ENCODE measurements at regions of chr4 and their contacts with region 1.

Region 1: DNA sequence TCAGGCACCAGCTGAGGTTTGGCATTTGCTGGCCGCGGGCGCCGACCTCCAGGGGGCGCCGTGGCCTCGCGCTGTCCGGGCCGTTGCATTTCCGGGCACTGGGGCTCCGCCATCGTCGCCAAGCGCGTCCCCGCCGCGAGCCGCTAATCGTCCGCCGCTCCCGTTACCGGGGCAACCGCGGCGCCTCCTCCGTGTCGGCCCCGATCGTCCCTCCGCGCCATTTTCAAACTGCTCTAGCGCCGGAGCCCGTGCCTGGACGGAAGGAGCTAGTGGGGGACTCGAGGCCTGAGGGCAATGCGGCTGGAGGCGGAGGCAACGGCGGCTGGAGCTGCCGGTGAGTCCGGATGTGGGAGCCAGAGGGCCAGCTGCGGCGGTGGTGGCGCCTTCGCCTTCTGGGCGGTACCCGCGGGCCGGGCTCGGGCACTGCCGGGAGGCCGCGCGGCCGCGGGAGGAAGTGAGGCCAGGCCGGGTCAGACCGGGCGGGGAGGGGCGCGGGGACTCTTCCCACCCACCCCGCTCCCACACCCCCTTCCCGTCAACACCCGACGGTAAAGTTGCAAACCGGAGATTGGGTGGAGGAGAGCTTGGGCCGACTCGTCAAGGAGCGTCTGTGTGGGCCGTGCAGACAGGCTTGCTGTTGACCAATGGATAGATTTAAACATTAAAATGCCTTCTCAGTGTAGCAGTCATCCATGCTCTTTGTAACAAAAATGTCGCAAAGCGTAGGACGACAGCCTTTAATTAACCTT is at the start of gene CEP135:
- DNase-seq: peak; percentile 96
- H3K4me3 ChIP-seq: peak within 1 kb of the TSS; percentile 79 to 88 (median 84)
- H3K27ac ChIP-seq: peak within 1 kb of the TSS; percentile 84 to 95 (median 88)
- H3K4me1 ChIP-seq: peaks cover 0 to 31% (median 21%) of the 10 kb centered on the region in 4 donors
- H3K27me3 ChIP-seq: no peaks in the 10 kb centered on the region
- CTCF ChIP-seq: peak; percentile 73 to 94 (median 88)
- EP300 ChIP-seq: no peak
- POLR2A ChIP-seq: no peak
- total RNA-seq, gene CEP135: 4.3 to 8.6 (median 6.9) TPM

Region 2: DNA sequence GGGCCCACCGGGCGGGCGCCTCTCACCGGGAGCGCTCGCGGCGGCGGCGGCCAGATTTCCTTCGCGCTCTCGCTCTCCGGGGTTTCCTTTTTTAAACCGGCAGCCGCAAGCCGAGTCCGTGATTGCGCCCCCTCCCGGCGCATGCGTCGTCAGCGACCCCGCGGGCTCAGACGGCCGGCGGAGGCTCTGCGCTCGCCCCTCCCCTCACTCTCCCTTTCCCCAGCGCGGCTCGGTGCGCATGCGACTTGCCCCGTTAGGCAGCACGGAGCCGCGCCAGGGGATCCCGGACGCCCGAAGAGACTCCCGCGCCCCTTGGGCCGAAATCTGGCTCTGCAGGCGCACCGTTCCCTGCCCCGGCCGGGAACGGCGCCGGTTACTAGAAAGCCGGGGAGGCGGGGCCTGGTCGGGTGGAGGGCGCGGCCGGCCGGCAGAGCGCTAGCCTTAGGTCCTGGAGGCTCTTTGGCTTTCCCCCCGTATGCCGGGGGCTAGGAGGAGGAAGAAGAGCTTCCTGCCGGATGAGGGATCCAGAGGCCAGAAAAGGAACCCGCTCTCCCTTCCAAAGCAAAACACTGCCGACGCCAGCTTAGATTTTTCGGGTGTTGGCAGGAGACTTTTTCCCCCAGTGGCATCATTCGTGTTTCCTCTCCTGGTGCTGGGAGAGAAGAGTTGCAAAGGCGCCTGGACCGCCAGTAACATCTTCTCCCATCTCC is 402.0 kb before region 1 on chr4 and contains the start of gene CLOCK:
- intact Hi-C with region 1: loop called (anchors 5 kb)
- DNase-seq: peak; percentile 92
- H3K4me3 ChIP-seq: peak within 1 kb of the TSS; percentile 61 to 98 (median 86)
- H3K27ac ChIP-seq: peak within 1 kb of the TSS; percentile 91 to 99 (median 98)
- H3K4me1 ChIP-seq: peaks cover 3 to 24% (median 10%) of the 10 kb centered on the region in 4 donors
- H3K27me3 ChIP-seq: no peaks in the 10 kb centered on the region
- CTCF ChIP-seq: peak; percentile 22 to 58 (median 46)
- EP300 ChIP-seq: no peak
- POLR2A ChIP-seq: peak; percentile 51 to 63
- total RNA-seq, gene CLOCK: 22.5 to 27.5 (median 24.0) TPM

Region 3: DNA sequence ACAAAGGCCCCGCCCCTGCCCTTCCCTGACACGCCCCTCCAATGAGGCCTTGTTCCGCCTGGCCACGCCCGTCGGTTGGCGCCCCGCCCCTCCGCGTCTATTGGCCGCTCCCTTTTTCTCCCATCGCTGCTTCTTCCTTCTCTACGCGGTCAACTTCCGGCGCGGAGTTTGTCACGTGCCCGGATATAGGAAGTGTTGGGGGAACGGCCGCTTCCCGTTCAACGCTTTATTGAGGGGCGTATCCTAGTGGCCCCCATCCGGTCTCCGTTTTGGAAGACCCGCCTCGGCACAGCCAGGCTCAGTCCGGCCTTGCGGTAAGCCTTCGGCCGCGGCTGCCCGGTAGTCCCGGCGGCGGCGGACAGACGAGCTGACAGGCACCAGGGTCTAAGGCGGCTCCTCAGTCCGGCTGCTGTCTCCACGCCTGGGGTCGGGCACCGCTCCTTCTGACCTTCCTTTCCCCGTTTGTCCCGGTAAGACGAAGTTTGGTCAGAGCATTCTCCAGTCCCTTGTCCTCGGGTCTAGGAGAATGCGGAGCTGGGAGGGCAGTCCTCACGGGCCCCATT is 95.3 kb before region 1 on chr4 and contains the start of gene EXOC1:
- intact Hi-C with region 1: loop called (anchors 10 kb)
- DNase-seq: peak; percentile 99
- H3K4me3 ChIP-seq: peak within 1 kb of the TSS; percentile 73 to 93 (median 86)
- H3K27ac ChIP-seq: peak within 1 kb of the TSS; percentile 85 to 88 (median 88)
- H3K4me1 ChIP-seq: peaks cover 0 to 21% (median 17%) of the 10 kb centered on the region in 4 donors
- H3K27me3 ChIP-seq: no peaks in the 10 kb centered on the region
- CTCF ChIP-seq: no peak
- EP300 ChIP-seq: peak in 1 of 4 donors; percentile 38
- POLR2A ChIP-seq: peak in 1 of 2 donors; percentile 32
- total RNA-seq, gene EXOC1: 14.5 to 49.0 (median 21.7) TPM

Region 4: GRCh38 chr4:56301181-56302076 is 352.5 kb after region 1 on chr4:
- intact Hi-C with region 1: loop called (anchors 2 kb)
- DNase-seq: peak; percentile 79
- H3K4me3 ChIP-seq: no peak overlapping the region
- H3K27ac ChIP-seq: peak overlapping the region in 1 of 4 donors; percentile 49
- H3K4me1 ChIP-seq: peaks cover 0 to 23% (median 17%) of the 10 kb centered on the region in 4 donors
- H3K27me3 ChIP-seq: no peaks in the 10 kb centered on the region
- CTCF ChIP-seq: peak in 3 of 4 experiments; percentile 72 to 88 (median 73)
- EP300 ChIP-seq: no peak
- POLR2A ChIP-seq: no peak

Region 5: DNA sequence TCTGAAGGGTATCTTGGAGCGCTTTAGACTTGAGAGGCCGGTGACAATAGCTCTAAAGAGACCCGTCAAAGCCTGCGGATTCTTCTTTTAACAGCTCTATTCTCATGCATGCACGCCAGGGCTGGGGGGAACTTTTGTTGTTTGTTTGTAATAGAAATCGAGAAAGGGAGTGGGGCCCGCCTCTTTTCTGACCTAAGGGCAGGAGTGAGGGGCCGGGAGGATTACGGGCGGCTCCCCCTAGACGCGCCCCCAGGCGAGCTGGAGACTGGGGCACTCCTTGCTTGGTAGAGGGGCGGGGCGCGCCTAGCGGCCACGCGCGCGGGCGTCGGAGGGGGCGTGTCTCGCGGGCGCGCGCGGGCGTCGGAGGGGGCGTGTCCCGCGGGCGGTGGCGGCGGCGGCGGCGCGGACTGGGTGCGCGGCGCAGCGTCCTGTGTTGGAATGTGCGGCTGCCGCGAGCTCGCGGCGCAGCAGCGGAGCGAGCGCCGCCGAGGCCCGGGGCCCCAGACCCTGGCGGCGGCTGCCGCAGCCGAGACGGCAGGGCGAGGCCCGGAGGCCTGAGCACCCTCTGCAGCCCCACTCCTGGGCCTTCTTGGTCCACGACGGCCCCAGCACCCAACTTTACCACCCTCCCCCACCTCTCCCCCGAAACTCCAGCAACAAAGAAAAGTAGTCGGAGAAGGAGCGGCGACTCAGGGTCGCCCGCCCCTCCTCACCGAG is 958.7 kb after region 1 on chr4 and contains the start of gene REST:
- intact Hi-C with region 1: loop called (anchors 5 kb)
- DNase-seq: peak; percentile 87
- H3K4me3 ChIP-seq: peak within 1 kb of the TSS; percentile 75 to 98 (median 94)
- H3K27ac ChIP-seq: peak within 1 kb of the TSS; percentile 89 to 97 (median 95)
- H3K4me1 ChIP-seq: peaks cover 0 to 30% (median 27%) of the 10 kb centered on the region in 4 donors
- H3K27me3 ChIP-seq: no peaks in the 10 kb centered on the region
- CTCF ChIP-seq: no peak
- EP300 ChIP-seq: no peak
- POLR2A ChIP-seq: no peak
- total RNA-seq, gene REST: 23.7 to 32.8 (median 26.3) TPM